Activated CD4-positive, alpha-beta T cell treated with anti-CD3 and anti-CD28 coated beads for 36 hours (primary cell): ENCODE measurements at regions of chr4 and their contacts with region 1.

Region 1: GRCh38 chr4:56907489-56908205 is at the start of gene REST:
- DNase-seq: peak; percentile 88
- ATAC-seq: peak; percentile 64
- H3K4me3 Mint-ChIP-seq: peak within 1 kb of the TSS; percentile 73
- H3K27ac Mint-ChIP-seq: peak within 1 kb of the TSS; percentile 72
- H3K4me1 Mint-ChIP-seq: peaks cover 38% of the 10 kb centered on the region
- H3K27me3 Mint-ChIP-seq: no peaks in the 10 kb centered on the region
- total RNA-seq, gene REST: 44.0 to 44.9 TPM

Region 2: GRCh38 chr4:55546756-55547465 is 1360.7 kb before region 1 on chr4 and contains the start of gene CLOCK:
- CTCF ChIA-PET with region 1: no interaction called
- POLR2A ChIA-PET with region 1: no interaction called
- intact Hi-C with region 1: loop called in 1 of 2 experiments (anchors 5 kb)
- DNase-seq: peak; percentile 90
- ATAC-seq: peak; percentile 77
- H3K4me3 Mint-ChIP-seq: peak within 1 kb of the TSS; percentile 90
- H3K27ac Mint-ChIP-seq: peak within 1 kb of the TSS; percentile 86
- H3K4me1 Mint-ChIP-seq: peaks cover 46% of the 10 kb centered on the region
- H3K27me3 Mint-ChIP-seq: peaks cover 7% of the 10 kb centered on the region
- total RNA-seq, gene CLOCK: 10.4 to 13.3 TPM

Region 3: DNA sequence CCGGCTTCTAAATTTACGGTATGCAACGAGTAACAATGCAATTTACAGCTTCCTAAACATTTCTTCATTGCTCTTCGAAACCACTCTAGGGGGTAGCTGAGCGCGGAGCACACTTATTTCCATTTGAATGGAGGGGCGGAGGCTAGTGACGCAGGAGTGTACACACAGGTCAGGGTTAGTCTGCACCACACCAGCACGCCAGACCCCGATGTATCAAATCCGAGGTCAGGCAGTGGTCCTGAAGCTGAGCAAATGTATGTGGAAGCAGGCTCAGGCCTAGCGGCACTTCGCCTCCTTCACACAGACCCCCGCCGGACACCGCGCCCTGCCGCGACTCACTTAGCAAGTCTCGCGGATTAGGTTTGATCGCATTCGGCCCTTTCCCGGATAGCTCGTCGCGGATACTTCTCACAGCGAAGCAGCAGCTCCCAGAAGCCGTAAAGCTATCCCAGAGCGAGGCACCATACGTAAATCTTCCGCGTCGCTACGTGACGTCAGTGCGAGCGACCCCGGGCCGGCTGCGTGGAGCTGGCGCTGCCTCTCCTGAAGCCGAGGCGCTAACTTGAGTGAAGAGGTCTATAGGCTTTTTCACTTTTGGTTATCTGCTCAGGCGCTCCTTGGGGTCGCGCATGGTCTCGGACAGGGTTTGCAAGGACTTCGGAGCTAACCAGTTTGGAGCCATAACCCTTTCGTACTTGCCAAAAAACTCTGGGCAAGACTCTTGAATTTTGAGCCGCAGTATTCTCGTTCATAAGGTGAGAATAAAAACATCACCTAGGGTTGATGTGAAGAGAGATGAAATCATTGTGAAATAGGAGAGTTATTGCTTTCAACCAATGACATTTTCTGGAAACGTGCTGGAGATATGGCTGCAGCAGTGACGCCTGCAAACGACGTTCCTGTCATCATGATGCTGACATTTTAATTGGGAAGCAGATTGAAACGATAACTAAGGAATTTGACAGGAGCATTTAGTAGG is 520.3 kb before region 1 on chr4 and contains the start of gene AASDH:
- CTCF ChIA-PET with region 1: no interaction called
- POLR2A ChIA-PET with region 1: interaction called, 3 read pairs
- intact Hi-C with region 1: loop called in 1 of 2 experiments (anchors 2 kb)
- DNase-seq: peak; percentile 97
- ATAC-seq: peak; percentile 94
- H3K4me3 Mint-ChIP-seq: peak within 1 kb of the TSS; percentile 98
- H3K27ac Mint-ChIP-seq: peak within 1 kb of the TSS; percentile 100
- H3K4me1 Mint-ChIP-seq: peaks cover 31% of the 10 kb centered on the region
- H3K27me3 Mint-ChIP-seq: no peaks in the 10 kb centered on the region
- total RNA-seq, gene AASDH: 13.3 to 16.4 TPM

Region 4: GRCh38 chr4:56530269-56531148 is 377.1 kb before region 1 on chr4:
- CTCF ChIA-PET with region 1: interaction called, 3 read pairs
- POLR2A ChIA-PET with region 1: no interaction called
- intact Hi-C with region 1: loop called in 1 of 2 experiments (anchors 2 kb)
- DNase-seq: peak; percentile 92
- ATAC-seq: peak; percentile 99
- H3K4me3 Mint-ChIP-seq: no peak overlapping the region
- H3K27ac Mint-ChIP-seq: peak overlapping the region; percentile 11
- H3K4me1 Mint-ChIP-seq: peaks cover 3% of the 10 kb centered on the region
- H3K27me3 Mint-ChIP-seq: peaks cover 3% of the 10 kb centered on the region

Region 5: DNA sequence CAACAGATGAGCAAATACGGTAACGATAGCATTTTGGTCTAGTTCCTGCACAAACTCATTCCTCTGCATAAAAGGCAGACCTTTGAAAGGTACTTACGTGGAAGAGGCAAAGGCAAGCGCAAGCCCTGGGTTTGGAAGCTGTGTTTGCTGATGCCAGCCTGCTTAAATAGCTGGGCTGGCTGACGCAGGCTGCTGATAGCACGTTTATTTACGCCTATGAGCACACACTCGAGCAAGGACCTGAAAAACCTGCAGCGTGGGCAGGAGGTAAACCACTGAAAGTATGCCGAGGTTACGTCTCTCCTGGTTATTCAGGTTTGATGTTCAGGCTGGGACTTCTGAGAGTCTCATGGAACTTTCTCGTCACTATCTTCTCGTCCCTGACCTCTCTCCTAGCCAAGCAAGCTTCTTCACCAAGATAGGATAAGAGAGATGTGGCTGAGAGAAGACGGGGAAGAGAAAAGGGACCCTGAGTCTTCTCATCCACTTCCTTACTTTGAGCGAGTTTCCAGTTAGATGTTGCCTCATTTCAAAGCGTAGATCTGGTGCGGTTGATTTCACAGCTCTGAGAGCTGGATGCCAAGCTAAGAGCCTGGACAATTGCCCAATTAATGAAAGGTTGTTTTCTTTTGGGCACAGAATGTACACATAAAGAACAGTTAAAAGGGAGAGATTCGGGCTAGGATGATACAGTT is 226.3 kb before region 1 on chr4 and contains the start of gene HOPX:
- CTCF ChIA-PET with region 1: no interaction called
- POLR2A ChIA-PET with region 1: no interaction called
- intact Hi-C with region 1: loop called in 1 of 2 experiments (anchors 2 kb)
- DNase-seq: peak; percentile 90
- ATAC-seq: peak; percentile 84
- H3K4me3 Mint-ChIP-seq: peak within 1 kb of the TSS; percentile 51
- H3K27ac Mint-ChIP-seq: peak within 1 kb of the TSS; percentile 61
- H3K4me1 Mint-ChIP-seq: peaks cover 34% of the 10 kb centered on the region
- H3K27me3 Mint-ChIP-seq: peaks cover 28% of the 10 kb centered on the region
- total RNA-seq, gene HOPX: 56.3 to 83.9 TPM

Region 6: GRCh38 chr4:56821381-56822243 is 86.0 kb before region 1 on chr4 and contains the start of gene SPINK2:
- CTCF ChIA-PET with region 1: interaction called, 3 read pairs
- POLR2A ChIA-PET with region 1: no interaction called
- intact Hi-C with region 1: loop called in 1 of 2 experiments (anchors 1 kb)
- DNase-seq: peak; percentile 83
- ATAC-seq: peak; percentile 79
- H3K4me3 Mint-ChIP-seq: peak within 1 kb of the TSS; percentile 69
- H3K27ac Mint-ChIP-seq: no peak within 1 kb of the TSS
- H3K4me1 Mint-ChIP-seq: peaks cover 34% of the 10 kb centered on the region
- H3K27me3 Mint-ChIP-seq: peaks cover 11% of the 10 kb centered on the region
- total RNA-seq, gene SPINK2: 1.3 to 1.9 TPM

Region 7: GRCh38 chr4:56977321-56978012 is 69.8 kb after region 1 on chr4 and contains the start of gene NOA1:
- CTCF ChIA-PET with region 1: interaction called, 19 read pairs
- POLR2A ChIA-PET with region 1: interaction called, 18 read pairs
- intact Hi-C with region 1: loop called (anchors 1 kb)
- DNase-seq: peak; percentile 98
- ATAC-seq: peak; percentile 84
- H3K4me3 Mint-ChIP-seq: peak within 1 kb of the TSS; percentile 88
- H3K27ac Mint-ChIP-seq: peak within 1 kb of the TSS; percentile 97
- H3K4me1 Mint-ChIP-seq: peaks cover 51% of the 10 kb centered on the region
- H3K27me3 Mint-ChIP-seq: no peaks in the 10 kb centered on the region
- total RNA-seq, gene NOA1: 24.9 to 31.5 TPM